ENCODE measurements at regions of chr3 and their contacts with region 1.

Region 1: DNA sequence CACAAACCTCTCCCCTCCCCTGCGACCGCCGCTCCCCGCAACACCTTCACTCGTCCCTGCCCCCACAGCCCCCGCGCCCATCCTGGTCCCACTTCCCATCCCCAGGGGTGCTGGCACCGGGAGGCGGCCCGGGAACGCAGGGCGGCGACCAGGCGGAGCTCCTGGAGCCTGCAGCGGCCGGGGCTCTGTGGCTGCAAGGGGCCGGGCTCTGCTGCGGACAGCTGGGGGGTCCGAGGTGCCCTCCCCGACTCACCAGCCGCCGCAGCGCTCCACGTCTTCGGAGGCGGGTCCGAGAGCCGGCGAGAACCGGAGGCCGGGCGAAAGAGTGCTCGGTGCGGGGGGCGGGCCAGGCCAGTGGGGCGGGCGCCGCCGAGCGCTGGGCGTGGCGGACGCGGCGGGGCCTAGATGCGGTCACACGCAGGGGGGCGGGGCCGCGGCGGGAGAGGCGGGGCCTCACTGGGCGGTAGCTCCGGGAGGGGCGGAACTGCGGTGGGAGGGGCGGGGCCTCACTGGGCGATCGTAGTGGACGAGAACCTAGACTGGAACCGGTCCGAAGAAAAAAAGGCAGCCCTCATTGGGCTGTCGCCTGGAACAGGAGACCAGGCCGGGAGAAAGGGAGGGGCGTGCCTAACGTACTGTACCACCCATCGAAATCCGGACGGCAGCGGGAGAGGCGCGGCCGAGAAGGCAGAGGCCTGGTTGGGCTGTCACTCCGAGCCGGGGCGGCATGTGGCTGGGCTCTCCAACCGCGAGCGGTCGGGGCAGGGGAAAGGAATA is at the start of gene ANO10:
- DNase-seq: peak; percentile 96
- ATAC-seq: peak; percentile 92
- H3K4me3 ChIP-seq: peak within 1 kb of the TSS; percentile 61 to 79 (median 72)
- H3K4me3 Mint-ChIP-seq: peak within 1 kb of the TSS; percentile 88
- H3K27ac ChIP-seq: peak within 1 kb of the TSS; percentile 2 to 28
- H3K27ac Mint-ChIP-seq: peak within 1 kb of the TSS; percentile 77
- H3K4me1 ChIP-seq: peaks cover 9 to 11% of the 10 kb centered on the region in 2 donors
- H3K4me1 Mint-ChIP-seq: peaks cover 12% of the 10 kb centered on the region
- H3K27me3 ChIP-seq: no peaks in the 10 kb centered on the region
- H3K27me3 Mint-ChIP-seq: peaks cover 4% of the 10 kb centered on the region
- CTCF ChIP-seq: no peak
- total RNA-seq, gene ANO10: 10.6 and 13.9 TPM in 2 replicates

Region 2: DNA sequence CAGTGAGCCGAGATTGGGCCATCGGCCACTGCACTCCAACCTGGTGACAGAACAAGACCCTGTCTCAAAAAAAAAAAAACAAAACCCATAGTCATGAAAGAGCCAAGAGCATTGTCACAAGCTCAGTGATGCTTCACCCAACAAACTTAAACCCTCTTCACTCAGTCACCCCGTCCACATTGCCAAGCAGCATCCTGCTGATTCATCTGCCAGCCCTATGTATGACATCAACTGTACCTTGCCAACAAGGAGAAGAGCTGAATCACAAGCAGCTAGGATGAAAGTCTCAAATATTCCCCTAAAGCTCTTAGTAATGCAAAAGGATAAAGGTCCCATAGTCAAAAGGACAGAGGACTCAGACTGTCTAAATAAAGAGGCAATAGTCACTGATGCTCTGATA is 90.0 kb before region 1 on chr3:
- CTCF ChIA-PET with region 1: no interaction called
- POLR2A ChIA-PET with region 1: interaction called, 13 read pairs
- intact Hi-C with region 1: no loop called
- DNase-seq: no peak
- ATAC-seq: no peak
- H3K4me3 ChIP-seq: no peak overlapping the region
- H3K4me3 Mint-ChIP-seq: no peak overlapping the region
- H3K27ac ChIP-seq: no peak overlapping the region
- H3K27ac Mint-ChIP-seq: no peak overlapping the region
- H3K4me1 ChIP-seq: no peaks in the 10 kb centered on the region
- H3K4me1 Mint-ChIP-seq: no peaks in the 10 kb centered on the region
- H3K27me3 ChIP-seq: no peaks in the 10 kb centered on the region
- H3K27me3 Mint-ChIP-seq: peaks cover 3% of the 10 kb centered on the region
- CTCF ChIP-seq: no peak

Region 3: DNA sequence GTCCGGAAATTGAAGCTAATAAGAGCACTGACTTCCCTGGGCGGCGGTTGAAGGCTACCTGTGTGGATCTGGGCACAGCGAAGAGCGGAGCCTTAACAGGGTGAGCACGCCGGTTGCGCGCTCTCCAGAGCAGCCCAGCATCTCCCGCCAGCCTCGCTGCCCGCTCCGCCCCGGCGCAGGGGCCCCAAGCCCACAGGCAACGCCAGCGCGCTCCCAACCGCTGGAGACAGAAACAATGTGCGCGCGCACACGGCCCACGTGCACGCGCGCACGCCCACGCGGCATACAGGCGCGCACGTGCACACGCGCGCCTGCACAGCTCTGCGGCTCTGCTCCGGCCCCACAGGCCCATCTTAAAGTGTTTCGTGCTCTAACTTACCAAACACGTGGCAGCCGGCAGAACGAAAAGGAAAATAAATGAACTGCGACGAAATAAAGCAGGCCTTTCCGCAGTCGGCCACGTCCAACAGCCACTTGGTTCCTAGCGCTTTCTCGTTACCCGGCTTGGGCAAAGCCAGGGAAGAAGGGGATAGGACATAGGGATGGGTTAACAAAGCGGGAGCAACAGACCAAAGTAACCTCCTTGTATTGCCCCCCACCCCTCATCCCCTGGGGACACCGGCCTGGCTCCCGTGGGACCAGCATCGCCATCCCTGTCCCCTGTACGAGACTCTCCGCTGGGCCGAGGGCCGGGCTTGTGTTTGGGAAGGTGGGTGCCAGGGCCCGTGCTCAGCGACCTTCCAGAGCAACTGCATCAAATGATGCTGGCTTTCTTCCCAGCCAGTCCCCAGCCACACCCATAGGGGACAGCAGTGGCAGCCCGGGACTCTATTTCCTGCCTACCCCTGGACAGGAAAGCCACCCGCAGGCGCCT is 272.6 kb after region 1 on chr3:
- CTCF ChIA-PET with region 1: no interaction called
- POLR2A ChIA-PET with region 1: no interaction called
- intact Hi-C with region 1: loop called (anchors 5 kb)
- DNase-seq: peak; percentile 74
- ATAC-seq: peak; percentile 64
- H3K4me3 ChIP-seq: peak overlapping the region; percentile 1 to 69 (median 50)
- H3K4me3 Mint-ChIP-seq: peak overlapping the region; percentile 91
- H3K27ac ChIP-seq: no peak overlapping the region
- H3K27ac Mint-ChIP-seq: peak overlapping the region; percentile 84
- H3K4me1 ChIP-seq: peaks cover 27 to 32% of the 10 kb centered on the region in 2 donors
- H3K4me1 Mint-ChIP-seq: peaks cover 38% of the 10 kb centered on the region
- H3K27me3 ChIP-seq: peaks cover 0 to 15% (median 7%) of the 10 kb centered on the region in 4 experiments
- H3K27me3 Mint-ChIP-seq: peaks cover 26% of the 10 kb centered on the region
- CTCF ChIP-seq: no peak

Region 4: DNA sequence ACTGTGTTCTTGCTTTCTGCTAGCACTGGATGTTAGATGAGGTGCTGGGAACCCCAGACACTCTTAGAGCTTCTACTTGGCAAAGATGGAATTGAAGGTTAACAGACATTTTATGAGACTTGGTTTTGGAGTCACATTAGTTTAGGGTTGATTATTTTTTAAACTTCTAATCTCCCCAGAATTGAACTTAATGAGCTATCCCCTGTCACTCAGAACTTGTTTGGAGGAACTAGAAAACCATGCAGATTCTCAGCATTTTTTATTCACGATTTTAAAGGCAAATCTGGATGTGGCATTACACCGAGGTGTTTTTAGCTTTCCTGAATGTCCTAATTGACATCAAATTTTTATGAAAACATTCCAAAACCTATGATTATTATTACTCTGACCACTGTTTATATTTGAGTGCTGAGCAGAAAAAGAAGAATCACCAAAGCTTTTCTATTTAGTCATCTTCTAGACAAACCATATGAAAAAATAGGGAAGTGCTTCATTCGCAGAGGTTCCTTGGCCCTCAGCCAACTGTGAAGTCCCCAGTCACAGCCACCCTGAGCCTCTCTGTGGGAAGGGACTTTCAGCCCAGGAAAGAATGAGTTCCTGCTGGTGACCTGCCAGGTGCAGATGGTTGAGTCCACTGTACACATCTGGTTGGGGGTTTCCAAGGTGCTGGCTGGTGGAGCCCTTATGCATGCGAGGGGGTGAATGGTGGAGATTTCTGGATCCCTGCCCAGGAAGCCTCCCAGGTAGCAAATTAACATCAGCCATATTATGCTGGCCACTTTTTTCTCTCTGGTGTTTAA is 423.8 kb after region 1 on chr3:
- CTCF ChIA-PET with region 1: no interaction called
- POLR2A ChIA-PET with region 1: no interaction called
- intact Hi-C with region 1: loop called (anchors 5 kb)
- DNase-seq: peak; percentile 94
- ATAC-seq: peak; percentile 95
- H3K4me3 ChIP-seq: peak overlapping the region in 1 of 5 experiments; percentile 5
- H3K4me3 Mint-ChIP-seq: peak overlapping the region; percentile 44
- H3K27ac ChIP-seq: peak overlapping the region; percentile 57 to 75
- H3K27ac Mint-ChIP-seq: peak overlapping the region; percentile 80
- H3K4me1 ChIP-seq: peaks cover 53 to 68% of the 10 kb centered on the region in 2 donors
- H3K4me1 Mint-ChIP-seq: peaks cover 61% of the 10 kb centered on the region
- H3K27me3 ChIP-seq: no peaks in the 10 kb centered on the region
- H3K27me3 Mint-ChIP-seq: no peaks in the 10 kb centered on the region
- CTCF ChIP-seq: no peak

Region 5: GRCh38 chr3:44976002-44976815 is 1354.4 kb after region 1 on chr3 and contains the starts of genes EXOSC7 and ZDHHC3:
- CTCF ChIA-PET with region 1: no interaction called
- POLR2A ChIA-PET with region 1: no interaction called
- intact Hi-C with region 1: loop called (anchors 5 kb)
- DNase-seq: peak; percentile 93
- ATAC-seq: peak; percentile 94
- H3K4me3 ChIP-seq: peak within 1 kb of the TSS; percentile 85 to 98 (median 93)
- H3K4me3 Mint-ChIP-seq: peak within 1 kb of the TSS; percentile 93
- H3K27ac ChIP-seq: peak within 1 kb of the TSS; percentile 79 to 80
- H3K27ac Mint-ChIP-seq: peak within 1 kb of the TSS; percentile 93
- H3K4me1 ChIP-seq: peaks cover 25 to 27% of the 10 kb centered on the region in 2 donors
- H3K4me1 Mint-ChIP-seq: peaks cover 50% of the 10 kb centered on the region
- H3K27me3 ChIP-seq: no peaks in the 10 kb centered on the region
- H3K27me3 Mint-ChIP-seq: no peaks in the 10 kb centered on the region
- CTCF ChIP-seq: no peak
- total RNA-seq, gene EXOSC7: 32.9 and 40.0 TPM in 2 replicates
- total RNA-seq, gene ZDHHC3: 46.4 and 52.6 TPM in 2 replicates

Measured in B cell (primary cell).